ENCODE measurements at regions of chr2 and their contacts with region 1.

Region 1: GRCh38 chr2:132438691-132439090 is 22.1 kb downstream of the GPR39 start:
- DNase-seq: peak; percentile 78 to 98
- H3K4me3 ChIP-seq: peak overlapping the region; percentile 37; the same call in 1 of the 2 replicates
- H3K27ac ChIP-seq: peak overlapping the region; percentile 97
- H3K4me1 ChIP-seq: peaks cover 63% of the 10 kb centered on the region
- H3K27me3 ChIP-seq: no peaks in the 10 kb centered on the region
- CTCF ChIP-seq: no peak

Region 2: DNA sequence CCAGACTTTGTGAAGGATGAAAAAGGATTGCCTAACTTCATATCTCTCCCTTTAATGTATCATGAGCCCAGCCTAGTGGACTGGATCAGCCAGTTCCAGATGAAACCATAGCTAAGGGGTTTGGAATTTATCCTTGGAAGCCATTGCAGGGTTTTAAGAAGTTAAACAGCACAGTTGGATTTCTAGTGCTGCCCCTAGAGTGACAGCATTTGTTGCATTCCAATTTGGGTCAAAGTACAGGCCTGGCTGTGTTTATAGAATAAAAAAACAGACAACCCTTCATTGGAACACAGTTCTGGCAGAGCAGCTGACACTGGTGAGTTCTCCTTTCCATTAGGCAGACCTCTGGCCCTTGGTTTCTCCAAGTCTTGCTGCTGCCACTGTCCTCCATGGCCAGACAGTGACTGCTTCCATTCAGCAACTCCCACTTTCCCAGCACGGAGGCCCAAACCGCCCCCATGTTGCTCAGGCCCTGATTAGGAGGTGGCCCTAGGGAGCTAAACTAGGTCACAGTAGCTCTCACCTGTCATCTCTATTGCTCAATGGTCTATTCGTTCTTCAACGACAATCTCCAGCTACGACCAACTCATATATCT is 14.1 kb before region 1 on chr2:
- CTCF ChIA-PET with region 1: interaction called, 11 read pairs
- POLR2A ChIA-PET with region 1: no interaction called
- intact Hi-C with region 1: no loop called
- DNase-seq: peak in 1 of 2 experiments; percentile 85
- H3K4me3 ChIP-seq: no peak overlapping the region
- H3K27ac ChIP-seq: peak overlapping the region; percentile 14
- H3K4me1 ChIP-seq: peaks cover 88% of the 10 kb centered on the region
- H3K27me3 ChIP-seq: no peaks in the 10 kb centered on the region
- CTCF ChIP-seq: no peak

Region 3: DNA sequence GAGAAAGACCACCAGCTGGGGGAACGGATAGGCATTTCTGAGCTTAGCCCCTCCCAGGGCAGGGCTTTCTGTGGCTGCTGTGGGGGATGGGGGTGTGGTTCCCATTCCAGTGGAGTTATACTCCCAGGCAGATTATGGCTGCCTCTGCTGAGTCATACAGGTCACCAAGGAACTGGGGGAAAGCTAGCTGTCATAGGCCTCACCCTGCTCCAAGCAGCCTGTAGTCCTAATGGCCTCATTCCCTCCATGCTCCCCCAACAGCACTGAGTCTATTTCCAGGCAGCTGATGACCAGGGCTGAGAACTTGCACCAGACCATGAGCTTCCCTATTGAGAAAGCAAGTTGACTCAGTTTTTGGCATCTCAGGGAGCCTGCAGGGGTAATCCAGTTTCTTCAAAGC is 65.0 kb after region 1 on chr2:
- CTCF ChIA-PET with region 1: no interaction called
- POLR2A ChIA-PET with region 1: interaction called, 16 read pairs
- intact Hi-C with region 1: no loop called
- DNase-seq: peak; percentile 3 to 43
- H3K4me3 ChIP-seq: no peak overlapping the region
- H3K27ac ChIP-seq: peak overlapping the region; percentile 30; the same call in 1 of the 2 replicates
- H3K4me1 ChIP-seq: peaks cover 14% of the 10 kb centered on the region
- H3K27me3 ChIP-seq: no peaks in the 10 kb centered on the region
- CTCF ChIP-seq: no peak

Region 4: DNA sequence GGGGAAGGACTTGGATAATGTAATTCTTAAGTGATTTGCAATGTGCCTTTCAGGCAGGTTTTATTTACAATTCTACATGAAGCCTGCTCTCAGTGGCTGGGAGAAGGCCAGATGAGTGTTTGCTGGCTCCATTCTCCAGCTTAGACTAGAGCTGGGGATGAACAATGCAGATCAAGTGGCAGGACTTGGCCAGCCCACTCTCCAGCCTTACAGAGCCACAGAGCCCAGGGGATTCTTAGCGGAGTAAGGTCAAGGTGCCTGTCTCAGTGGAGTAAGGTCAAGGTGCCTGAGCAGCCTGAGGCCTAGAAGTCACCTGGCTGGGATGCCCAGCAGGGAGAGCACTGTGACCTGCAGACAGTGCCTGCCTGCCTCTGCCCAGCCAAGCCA is 143.7 kb after region 1 on chr2:
- CTCF ChIA-PET with region 1: no interaction called
- POLR2A ChIA-PET with region 1: interaction called, 11 read pairs
- intact Hi-C with region 1: no loop called
- DNase-seq: no peak
- H3K4me3 ChIP-seq: no peak overlapping the region
- H3K27ac ChIP-seq: no peak overlapping the region
- H3K4me1 ChIP-seq: no peaks in the 10 kb centered on the region
- H3K27me3 ChIP-seq: no peaks in the 10 kb centered on the region
- CTCF ChIP-seq: no peak

Region 5: GRCh38 chr2:132670496-132671150 is 231.9 kb after region 1 on chr2:
- CTCF ChIA-PET with region 1: no interaction called
- POLR2A ChIA-PET with region 1: no interaction called
- intact Hi-C with region 1: loop called (anchors 2 kb)
- DNase-seq: peak; percentile 40 to 64
- H3K4me3 ChIP-seq: peak overlapping the region; percentile 75
- H3K27ac ChIP-seq: 0 out of 2 replicates have a peak overlapping the region, but pooled peaks have one; percentile 6
- H3K4me1 ChIP-seq: peaks cover 12% of the 10 kb centered on the region
- H3K27me3 ChIP-seq: no peaks in the 10 kb centered on the region
- CTCF ChIP-seq: no peak